Caco-2 (cell line): ENCODE measurements at regions of chr20 and their contacts with region 1.

Region 1: GRCh38 chr20:32357869-32358631 is at the start of gene ASXL1:
- DNase-seq: peak; percentile 100
- H3K4me3 ChIP-seq: peak within 1 kb of the TSS; percentile 93
- H3K4me3 Mint-ChIP-seq: peak within 1 kb of the TSS; percentile 77
- H3K27ac Mint-ChIP-seq: peak within 1 kb of the TSS; percentile 95
- H3K4me1 ChIP-seq: peaks cover 53% of the 10 kb centered on the region
- H3K4me1 Mint-ChIP-seq: peaks cover 40% of the 10 kb centered on the region
- H3K27me3 ChIP-seq: no peaks in the 10 kb centered on the region
- H3K27me3 Mint-ChIP-seq: no peaks in the 10 kb centered on the region
- CTCF ChIP-seq: no peak
- total RNA-seq, gene ASXL1: 226 and 233 TPM in 2 replicates

Region 2: GRCh38 chr20:32227744-32228688 is 130.0 kb before region 1 on chr20:
- CTCF ChIA-PET with region 1: no interaction called
- POLR2A ChIA-PET with region 1: interaction called, 11 read pairs
- intact Hi-C with region 1: no loop called
- DNase-seq: peak; percentile 100
- H3K4me3 ChIP-seq: no peak overlapping the region
- H3K4me3 Mint-ChIP-seq: peak overlapping the region; percentile 59
- H3K27ac Mint-ChIP-seq: peak overlapping the region; percentile 99
- H3K4me1 ChIP-seq: peaks cover 57% of the 10 kb centered on the region
- H3K4me1 Mint-ChIP-seq: peaks cover 71% of the 10 kb centered on the region
- H3K27me3 ChIP-seq: no peaks in the 10 kb centered on the region
- H3K27me3 Mint-ChIP-seq: no peaks in the 10 kb centered on the region
- CTCF ChIP-seq: no peak

Region 3: DNA sequence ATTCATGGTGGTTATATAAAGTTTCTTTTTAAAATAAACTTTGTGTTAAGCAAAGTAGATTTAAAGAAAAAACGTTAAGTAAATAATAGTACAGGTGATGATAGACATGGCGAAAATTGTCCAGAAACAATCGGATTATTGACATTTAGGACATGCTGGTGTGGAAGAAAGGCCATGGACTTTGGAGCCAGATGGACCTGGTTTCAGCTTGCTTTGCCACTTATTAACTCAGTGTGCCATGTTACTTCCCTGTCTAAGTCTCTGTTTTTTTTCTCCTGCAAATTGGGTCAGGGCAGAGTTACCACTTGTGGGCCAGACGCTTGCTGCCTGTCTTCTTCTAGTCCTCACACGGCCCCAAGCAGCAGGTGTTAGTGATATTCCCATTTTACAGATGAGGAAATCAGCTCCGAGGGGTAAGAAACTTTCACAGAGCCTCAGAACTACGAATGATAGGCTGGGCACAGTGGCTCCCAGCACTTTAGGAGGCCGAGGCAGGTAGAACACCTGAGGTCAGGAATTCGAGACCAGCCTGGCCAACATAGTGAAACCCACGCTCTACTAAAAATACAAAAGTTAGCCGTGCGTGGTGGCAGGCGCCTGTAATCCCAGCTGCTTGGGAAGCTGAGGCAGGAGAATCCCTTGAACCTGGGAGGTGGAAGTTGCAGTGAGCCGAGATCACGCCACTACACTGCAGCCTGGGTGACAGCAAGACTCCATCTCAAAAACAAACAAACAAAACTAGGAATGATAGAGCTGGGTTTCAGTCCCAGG is 68.2 kb before region 1 on chr20:
- CTCF ChIA-PET with region 1: no interaction called
- POLR2A ChIA-PET with region 1: no interaction called
- intact Hi-C with region 1: loop called (anchors 1 kb)
- DNase-seq: peak; percentile 90 to 94
- H3K4me3 ChIP-seq: no peak overlapping the region
- H3K4me3 Mint-ChIP-seq: peak overlapping the region; percentile 54
- H3K27ac Mint-ChIP-seq: peak overlapping the region; percentile 81
- H3K4me1 ChIP-seq: peaks cover 52% of the 10 kb centered on the region
- H3K4me1 Mint-ChIP-seq: peaks cover 36% of the 10 kb centered on the region
- H3K27me3 ChIP-seq: no peaks in the 10 kb centered on the region
- H3K27me3 Mint-ChIP-seq: no peaks in the 10 kb centered on the region
- CTCF ChIP-seq: no peak

Region 4: DNA sequence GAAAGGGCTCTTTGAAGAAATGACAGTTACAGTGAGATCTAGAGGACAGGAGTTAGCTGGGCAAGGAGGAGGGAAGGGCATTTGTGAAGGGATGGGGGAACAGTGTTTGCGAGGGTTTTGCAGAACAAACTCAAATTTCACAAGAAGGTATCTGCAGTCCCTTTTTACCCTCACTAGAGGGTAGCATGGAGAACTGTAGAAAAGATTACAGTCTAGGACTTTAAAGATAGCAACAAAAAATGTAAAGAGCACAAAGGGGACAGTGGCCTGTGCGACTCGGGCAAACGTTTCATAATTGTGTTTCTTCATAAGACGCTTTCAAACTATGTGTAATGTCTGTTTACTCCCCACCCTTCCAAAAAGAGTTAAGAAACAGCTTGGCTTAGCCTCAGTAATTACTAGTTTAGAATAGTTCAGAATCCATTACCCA is 21.1 kb before region 1 on chr20:
- CTCF ChIA-PET with region 1: interaction called, 3 read pairs
- POLR2A ChIA-PET with region 1: interaction called, 4 read pairs
- intact Hi-C with region 1: loop called (anchors 1 kb)
- DNase-seq: peak in 1 of 2 experiments; percentile 78
- H3K4me3 ChIP-seq: no peak overlapping the region
- H3K4me3 Mint-ChIP-seq: no peak overlapping the region
- H3K27ac Mint-ChIP-seq: no peak overlapping the region
- H3K4me1 ChIP-seq: peaks cover 8% of the 10 kb centered on the region; the same call in 1 of the 2 replicates
- H3K4me1 Mint-ChIP-seq: peaks cover 16% of the 10 kb centered on the region
- H3K27me3 ChIP-seq: no peaks in the 10 kb centered on the region
- H3K27me3 Mint-ChIP-seq: no peaks in the 10 kb centered on the region
- CTCF ChIP-seq: peak; percentile 93 to 95

Region 5: GRCh38 chr20:32437391-32438074 is 79.5 kb after region 1 on chr20:
- CTCF ChIA-PET with region 1: no interaction called
- POLR2A ChIA-PET with region 1: no interaction called
- intact Hi-C with region 1: loop called (anchors 5 kb)
- DNase-seq: peak; percentile 58 to 69
- H3K4me3 ChIP-seq: no peak overlapping the region
- H3K4me3 Mint-ChIP-seq: no peak overlapping the region
- H3K27ac Mint-ChIP-seq: no peak overlapping the region
- H3K4me1 ChIP-seq: no peaks in the 10 kb centered on the region
- H3K4me1 Mint-ChIP-seq: peaks cover 1% of the 10 kb centered on the region
- H3K27me3 ChIP-seq: no peaks in the 10 kb centered on the region
- H3K27me3 Mint-ChIP-seq: no peaks in the 10 kb centered on the region
- CTCF ChIP-seq: peak; percentile 74 to 89